ENCODE measurements at regions of chr12 and their contacts with region 1.

Region 1: DNA sequence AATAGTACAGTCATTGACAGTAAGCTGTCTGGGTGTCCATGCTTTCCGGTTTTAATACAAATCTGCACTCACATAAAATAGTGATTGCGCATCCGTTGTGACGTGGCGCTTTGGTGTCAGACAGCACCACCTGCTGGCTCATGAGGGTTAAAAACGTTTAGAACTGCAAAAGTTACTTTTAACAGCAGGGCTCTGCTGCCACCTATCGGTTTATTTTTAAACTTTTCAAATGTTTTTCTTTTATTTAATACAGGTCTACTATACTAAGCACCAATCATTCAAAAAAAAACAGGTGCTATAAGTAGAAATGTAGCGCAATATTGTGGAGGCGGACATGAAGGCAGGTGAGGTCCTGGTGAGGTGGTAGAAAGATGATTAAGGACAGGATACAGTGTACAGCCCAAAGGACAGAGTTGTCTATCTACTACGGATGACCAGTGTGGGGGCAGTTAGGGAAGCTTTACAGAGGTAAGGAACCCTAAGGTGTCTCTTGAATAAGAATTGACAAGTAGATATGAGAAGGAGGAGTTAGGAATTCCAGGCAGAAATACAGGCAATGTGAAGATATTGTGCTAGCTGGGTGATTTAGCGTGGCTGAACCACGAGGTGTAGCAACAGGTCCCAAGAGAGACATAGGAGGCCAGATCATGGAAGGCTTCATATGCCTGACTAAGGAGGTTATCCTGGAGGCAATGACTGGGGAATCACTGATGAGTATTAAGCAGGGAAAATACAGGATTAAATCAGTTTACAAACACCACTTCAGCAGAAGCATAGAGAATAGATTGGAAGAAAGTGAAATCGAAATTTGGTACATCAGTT is 91.5 kb upstream of the PRB2 start:
- DNase-seq: peak; percentile 55 to 92 (median 79)
- ATAC-seq: peak; percentile 99
- H3K4me3 ChIP-seq: no peak overlapping the region
- H3K4me3 Mint-ChIP-seq: no peak overlapping the region
- H3K27ac ChIP-seq: no peak overlapping the region
- H3K27ac Mint-ChIP-seq: no peak overlapping the region
- H3K4me1 ChIP-seq: no peaks in the 10 kb centered on the region
- H3K4me1 Mint-ChIP-seq: peaks cover 8% of the 10 kb centered on the region
- H3K27me3 ChIP-seq: no peaks in the 10 kb centered on the region
- H3K27me3 Mint-ChIP-seq: no peaks in the 10 kb centered on the region
- CTCF ChIP-seq: peak; percentile 100

Region 2: DNA sequence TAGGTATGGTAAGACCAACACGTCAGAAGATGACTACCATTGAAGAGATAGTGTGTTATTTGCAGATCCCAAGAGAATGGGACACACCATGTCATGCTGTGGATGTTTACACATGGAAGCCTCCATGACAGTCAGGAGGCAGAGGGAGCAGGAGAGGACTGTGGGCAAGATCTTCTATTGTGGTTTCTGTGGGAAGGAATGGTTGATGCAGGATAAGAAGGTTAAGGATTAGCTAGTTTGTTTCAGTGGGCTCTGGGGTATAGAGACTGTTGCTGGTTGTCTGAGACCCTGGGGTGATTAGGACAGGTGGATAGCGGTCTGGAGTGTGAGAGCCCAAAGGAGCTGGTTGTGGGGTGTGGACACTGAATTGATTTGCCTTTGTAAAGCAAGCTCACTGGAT is 707.7 kb before region 1 on chr12:
- CTCF ChIA-PET with region 1: interaction called, 94 read pairs
- POLR2A ChIA-PET with region 1: no interaction called
- intact Hi-C with region 1: no loop called
- DNase-seq: no peak
- ATAC-seq: no peak
- H3K4me3 ChIP-seq: no peak overlapping the region
- H3K4me3 Mint-ChIP-seq: no peak overlapping the region
- H3K27ac ChIP-seq: no peak overlapping the region
- H3K27ac Mint-ChIP-seq: no peak overlapping the region
- H3K4me1 ChIP-seq: no peaks in the 10 kb centered on the region
- H3K4me1 Mint-ChIP-seq: no peaks in the 10 kb centered on the region
- H3K27me3 ChIP-seq: no peaks in the 10 kb centered on the region
- H3K27me3 Mint-ChIP-seq: peaks cover 16% of the 10 kb centered on the region
- CTCF ChIP-seq: no peak

Region 3: GRCh38 chr12:11171145-11171968 is 315.5 kb before region 1 on chr12 and contains the start of gene SMIM10L1:
- CTCF ChIA-PET with region 1: no interaction called
- POLR2A ChIA-PET with region 1: no interaction called
- intact Hi-C with region 1: loop called in 1 of 2 experiments (anchors 1 kb)
- DNase-seq: peak; percentile 78 to 95 (median 88)
- ATAC-seq: peak; percentile 91
- H3K4me3 ChIP-seq: peak within 1 kb of the TSS; percentile 56 to 73
- H3K4me3 Mint-ChIP-seq: peak within 1 kb of the TSS; percentile 99
- H3K27ac ChIP-seq: peak within 1 kb of the TSS; percentile 72 to 86
- H3K27ac Mint-ChIP-seq: peak within 1 kb of the TSS; percentile 100
- H3K4me1 ChIP-seq: peaks cover 38% of the 10 kb centered on the region
- H3K4me1 Mint-ChIP-seq: peaks cover 66% of the 10 kb centered on the region
- H3K27me3 ChIP-seq: no peaks in the 10 kb centered on the region
- H3K27me3 Mint-ChIP-seq: no peaks in the 10 kb centered on the region
- CTCF ChIP-seq: no peak
- total RNA-seq, gene SMIM10L1: 9.2 to 9.6 TPM

Region 4: GRCh38 chr12:11273449-11273848 is 213.4 kb before region 1 on chr12:
- CTCF ChIA-PET with region 1: no interaction called
- POLR2A ChIA-PET with region 1: no interaction called
- intact Hi-C with region 1: no loop called
- DNase-seq: no peak
- ATAC-seq: no peak
- H3K4me3 ChIP-seq: no peak overlapping the region
- H3K4me3 Mint-ChIP-seq: no peak overlapping the region
- H3K27ac ChIP-seq: no peak overlapping the region
- H3K27ac Mint-ChIP-seq: no peak overlapping the region
- H3K4me1 ChIP-seq: no peaks in the 10 kb centered on the region
- H3K4me1 Mint-ChIP-seq: no peaks in the 10 kb centered on the region
- H3K27me3 ChIP-seq: no peaks in the 10 kb centered on the region
- H3K27me3 Mint-ChIP-seq: no peaks in the 10 kb centered on the region
- CTCF ChIP-seq: no peak

Region 5: DNA sequence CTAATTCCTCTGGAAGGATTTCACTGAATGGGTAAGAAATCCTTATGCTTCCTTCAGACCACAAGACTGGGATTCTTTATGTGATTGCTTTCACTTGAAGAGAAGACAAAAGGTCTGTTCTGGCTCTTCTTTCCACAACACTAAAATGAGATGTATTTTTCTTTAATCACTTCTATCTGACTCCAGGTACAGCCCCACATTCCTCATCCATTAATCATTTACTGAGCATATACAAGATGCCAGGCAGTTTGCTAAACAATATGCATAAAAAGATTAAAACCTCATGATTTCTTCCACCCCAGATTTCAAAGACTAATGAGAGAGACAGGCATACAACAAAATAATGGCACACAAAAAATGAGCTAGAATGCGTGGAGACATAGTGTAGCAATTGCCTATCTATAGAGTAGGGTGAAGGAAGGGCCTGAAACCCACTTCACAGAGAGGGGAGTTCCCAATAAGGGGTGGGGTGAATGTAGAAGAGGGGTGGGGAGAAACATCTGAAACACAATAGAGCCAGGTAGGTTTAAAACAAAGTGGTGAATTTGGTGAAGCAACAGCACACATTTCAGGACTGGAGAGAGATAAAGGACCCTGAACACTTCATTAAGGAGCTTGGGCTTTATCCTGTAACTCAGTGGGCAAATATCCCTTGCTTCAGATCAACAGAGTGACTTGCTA is 26.4 kb before region 1 on chr12:
- CTCF ChIA-PET with region 1: no interaction called
- POLR2A ChIA-PET with region 1: no interaction called
- intact Hi-C with region 1: no loop called
- DNase-seq: no peak
- ATAC-seq: no peak
- H3K4me3 ChIP-seq: no peak overlapping the region
- H3K4me3 Mint-ChIP-seq: no peak overlapping the region
- H3K27ac ChIP-seq: no peak overlapping the region
- H3K27ac Mint-ChIP-seq: no peak overlapping the region
- H3K4me1 ChIP-seq: no peaks in the 10 kb centered on the region
- H3K4me1 Mint-ChIP-seq: no peaks in the 10 kb centered on the region
- H3K27me3 ChIP-seq: no peaks in the 10 kb centered on the region
- H3K27me3 Mint-ChIP-seq: peaks cover 2% of the 10 kb centered on the region
- CTCF ChIP-seq: no peak

Region 6: DNA sequence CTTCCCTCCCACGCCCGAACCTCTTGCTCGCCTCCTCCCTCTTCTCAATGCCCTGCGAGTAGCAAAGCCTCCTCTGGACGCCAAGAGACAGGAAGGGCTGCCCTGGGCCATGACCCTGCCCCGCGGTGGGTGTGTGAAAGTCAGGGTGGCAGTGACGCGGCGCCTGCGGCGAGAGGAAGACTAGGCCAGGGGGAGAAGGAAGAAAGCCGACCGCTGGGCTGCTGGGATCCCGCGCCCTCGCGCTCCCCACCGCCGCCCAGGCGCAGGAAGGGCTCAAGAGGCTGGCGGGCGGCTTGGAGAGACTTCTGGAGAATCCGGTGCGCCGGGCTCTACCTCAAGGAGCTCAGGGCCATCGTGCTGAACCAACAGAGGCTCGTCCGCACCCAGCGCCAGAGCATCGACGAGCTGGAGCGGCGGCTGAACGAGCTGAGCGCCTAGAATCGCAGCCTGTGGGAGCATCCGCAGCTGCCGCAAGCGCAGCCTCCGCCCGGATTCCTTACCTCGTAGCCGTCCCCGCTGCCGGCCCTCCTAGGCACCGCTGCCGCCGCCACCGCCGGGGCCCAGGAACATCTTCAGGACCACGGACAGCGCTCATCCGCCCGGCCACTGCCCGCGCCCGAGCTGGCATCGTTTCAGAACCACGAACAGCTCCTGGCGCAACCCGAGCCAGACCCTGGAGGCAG is 13.5 kb after region 1 on chr12:
- CTCF ChIA-PET with region 1: interaction called, 6 read pairs
- POLR2A ChIA-PET with region 1: no interaction called
- intact Hi-C with region 1: loop called in 1 of 2 experiments (anchors 1 kb)
- DNase-seq: peak; percentile 60 to 84 (median 78)
- ATAC-seq: peak; percentile 95
- H3K4me3 ChIP-seq: no peak overlapping the region
- H3K4me3 Mint-ChIP-seq: no peak overlapping the region
- H3K27ac ChIP-seq: no peak overlapping the region
- H3K27ac Mint-ChIP-seq: no peak overlapping the region
- H3K4me1 ChIP-seq: peaks cover 9% of the 10 kb centered on the region
- H3K4me1 Mint-ChIP-seq: peaks cover 8% of the 10 kb centered on the region
- H3K27me3 ChIP-seq: peaks cover 0 to 3% of the 10 kb centered on the region in 2 experiments
- H3K27me3 Mint-ChIP-seq: peaks cover 41% of the 10 kb centered on the region
- CTCF ChIP-seq: no peak

Measured in CD8-positive, alpha-beta T cell (primary cell).